T-cell (primary cell): ENCODE measurements at regions of chr12 and their contacts with region 1.

Region 1: GRCh38 chr12:47095446-47096236 is 15.9 kb upstream of the AMIGO2 start:
- DNase-seq: no peak
- ATAC-seq: no peak
- H3K4me3 ChIP-seq: no peak overlapping the region
- H3K4me3 Mint-ChIP-seq: peak overlapping the region in 1 of 3 donors; percentile 3
- H3K27ac ChIP-seq: no peak overlapping the region
- H3K27ac Mint-ChIP-seq: peak overlapping the region in 1 of 2 donors; percentile 5
- H3K4me1 ChIP-seq: peaks cover 0 to 12% of the 10 kb centered on the region in 2 experiments
- H3K4me1 Mint-ChIP-seq: peaks cover 29 to 48% (median 36%) of the 10 kb centered on the region in 3 donors
- H3K27me3 ChIP-seq: no peaks in the 10 kb centered on the region
- H3K27me3 Mint-ChIP-seq: no peaks in the 10 kb centered on the region

Region 2: DNA sequence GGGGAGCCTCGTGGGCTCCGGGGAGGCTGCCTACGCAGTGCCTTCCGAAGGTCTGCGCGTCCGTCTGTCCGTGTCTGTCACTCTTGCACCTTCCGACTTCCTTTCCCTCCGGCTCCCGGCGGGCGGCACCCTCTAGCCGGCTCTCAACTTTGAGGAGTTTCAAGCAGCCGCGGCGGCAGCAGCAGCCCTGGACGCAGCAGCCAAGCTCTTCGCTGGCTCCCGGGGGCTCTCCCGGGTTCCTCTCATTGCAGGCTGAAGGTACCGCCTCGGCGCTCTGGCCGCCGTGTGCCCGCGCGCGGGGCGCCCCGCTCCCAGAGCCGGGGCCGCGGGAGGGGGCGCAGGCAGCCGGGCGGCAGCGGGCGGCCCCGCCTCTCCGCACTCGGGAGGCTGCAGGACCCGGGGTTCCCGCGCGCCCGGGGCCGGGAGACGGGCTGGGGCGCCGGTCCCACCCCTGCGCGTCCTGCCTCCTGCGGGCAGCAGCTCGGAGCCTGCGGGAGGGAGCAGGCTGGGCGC is 16.1 kb before region 1 on chr12 and contains the starts of genes AMIGO2 and PCED1B:
- CTCF ChIA-PET with region 1: no interaction called
- POLR2A ChIA-PET with region 1: interaction called in 1 of 2 experiments, 15 read pairs
- DNase-seq: peak; percentile 29 to 71 (median 48)
- ATAC-seq: peak; percentile 60 to 63 (median 61)
- H3K4me3 ChIP-seq: peak within 1 kb of the TSS; percentile 86 to 99
- H3K4me3 Mint-ChIP-seq: peak within 1 kb of the TSS; percentile 92 to 99 (median 96)
- H3K27ac ChIP-seq: peak within 1 kb of the TSS; percentile 85
- H3K27ac Mint-ChIP-seq: peak within 1 kb of the TSS; percentile 93 to 95
- H3K4me1 ChIP-seq: peaks cover 14 to 35% of the 10 kb centered on the region in 2 experiments
- H3K4me1 Mint-ChIP-seq: peaks cover 71 to 79% (median 75%) of the 10 kb centered on the region in 3 donors
- H3K27me3 ChIP-seq: no peaks in the 10 kb centered on the region
- H3K27me3 Mint-ChIP-seq: no peaks in the 10 kb centered on the region
- total RNA-seq, gene AMIGO2: 9.6 to 15.4 (median 14.2) TPM
- total RNA-seq, gene PCED1B: 53.7 to 159 (median 119) TPM